ENCODE measurements at regions of chr6 and their contacts with region 1.

Region 1: GRCh38 chr6:111210194-111210728 is 123.0 kb downstream of the SLC16A10 start:
- DNase-seq: no peak

Region 2: GRCh38 chr6:111011360-111012142 is 198.7 kb before region 1 on chr6:
- intact Hi-C with region 1: loop called (anchors 5 to 10 kb)
- DNase-seq: no peak

Region 3: GRCh38 chr6:111183702-111184517 is 26.4 kb before region 1 on chr6:
- intact Hi-C with region 1: loop called in 1 of 2 experiments (anchors 1 kb)
- DNase-seq: no peak

Measured in posterior vena cava (tissue), 2 donors.